ENCODE measurements at regions of chr6 and their contacts with region 1.

Region 1: DNA sequence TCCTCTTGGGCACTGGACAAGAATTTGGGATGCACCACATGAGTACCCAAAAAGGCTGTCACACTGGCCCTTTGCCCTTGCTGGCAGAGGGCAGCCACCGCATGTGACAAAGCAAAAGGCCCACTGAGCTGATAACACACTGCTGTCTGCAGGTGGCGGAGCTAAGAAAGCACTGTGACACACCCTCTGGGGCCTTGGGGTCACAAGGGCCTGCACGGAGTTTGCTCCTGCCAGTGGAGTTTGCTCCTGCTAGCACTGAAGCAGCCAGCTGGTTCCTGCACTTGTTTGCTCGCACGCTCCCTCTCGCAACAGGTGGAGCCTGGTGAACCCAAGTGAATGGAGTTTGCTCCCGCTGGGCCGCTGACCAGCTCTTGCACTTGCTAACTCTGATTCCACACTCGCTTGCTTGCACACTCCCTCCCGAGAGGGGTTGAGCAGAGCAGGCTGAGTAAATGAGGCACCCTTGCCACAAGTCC is 132.5 kb downstream of the LCA5 start:
- DNase-seq: no peak
- H3K4me3 ChIP-seq: no peak overlapping the region
- H3K27ac ChIP-seq: no peak overlapping the region
- H3K4me1 ChIP-seq: peaks cover 9% of the 10 kb centered on the region
- H3K27me3 ChIP-seq: no peaks in the 10 kb centered on the region
- CTCF ChIP-seq: no peak
- EP300 ChIP-seq: no peak
- POLR2A ChIP-seq: no peak

Region 2: GRCh38 chr6:79353226-79353625 is 51.5 kb before region 1 on chr6:
- intact Hi-C with region 1: loop called in 1 of 4 experiments (anchors 5 kb)
- DNase-seq: no peak
- H3K4me3 ChIP-seq: no peak overlapping the region
- H3K27ac ChIP-seq: no peak overlapping the region
- H3K4me1 ChIP-seq: no peaks in the 10 kb centered on the region
- H3K27me3 ChIP-seq: no peaks in the 10 kb centered on the region
- CTCF ChIP-seq: no peak
- EP300 ChIP-seq: no peak
- POLR2A ChIP-seq: no peak

Region 3: DNA sequence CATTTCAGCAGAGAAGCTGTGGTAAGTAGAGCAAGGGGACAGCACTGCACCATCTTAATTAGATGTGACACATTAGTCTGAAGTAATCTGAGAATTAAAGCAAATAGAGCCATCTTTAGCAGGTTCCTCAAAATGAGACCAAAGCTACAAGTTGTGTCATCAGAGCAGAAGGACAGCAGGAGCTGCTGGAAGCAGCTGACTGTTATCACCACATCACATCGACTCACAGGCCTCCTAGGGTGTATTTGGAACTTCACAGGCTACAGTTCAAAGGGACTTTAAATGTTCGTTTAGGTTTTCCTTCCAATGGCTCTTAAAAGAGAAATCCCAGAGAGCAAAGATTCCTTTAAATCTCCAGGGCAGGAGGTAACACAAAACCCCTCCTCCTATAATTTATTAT is 63.0 kb after region 1 on chr6:
- intact Hi-C with region 1: no loop called
- DNase-seq: no peak
- H3K4me3 ChIP-seq: no peak overlapping the region
- H3K27ac ChIP-seq: no peak overlapping the region
- H3K4me1 ChIP-seq: no peaks in the 10 kb centered on the region
- H3K27me3 ChIP-seq: no peaks in the 10 kb centered on the region
- CTCF ChIP-seq: no peak
- EP300 ChIP-seq: no peak
- POLR2A ChIP-seq: no peak

Region 4: GRCh38 chr6:79506251-79506650 is 101.5 kb after region 1 on chr6:
- intact Hi-C with region 1: no loop called
- DNase-seq: no peak
- H3K4me3 ChIP-seq: no peak overlapping the region
- H3K27ac ChIP-seq: no peak overlapping the region
- H3K4me1 ChIP-seq: no peaks in the 10 kb centered on the region
- H3K27me3 ChIP-seq: no peaks in the 10 kb centered on the region
- CTCF ChIP-seq: no peak
- EP300 ChIP-seq: no peak
- POLR2A ChIP-seq: no peak

Measured in ovary (tissue), 10 donors.